ENCODE measurements at regions of chr2 and their contacts with region 1.

Region 1: GRCh38 chr2:198116756-198117155 is 312.4 kb downstream of the PLCL1 start:
- DNase-seq: no peak
- ATAC-seq: peak in 3 of 4 donors; percentile 4 to 40 (median 13)
- H3K4me3 ChIP-seq: no peak overlapping the region
- H3K27ac ChIP-seq: peak overlapping the region in 8 of 12 donors; percentile 18 to 59 (median 35)
- H3K4me1 ChIP-seq: peaks cover 0 to 62% (median 32%) of the 10 kb centered on the region in 12 donors
- H3K27me3 ChIP-seq: no peaks in the 10 kb centered on the region
- CTCF ChIP-seq: no peak
- POLR2A ChIP-seq: no peak

Region 2: DNA sequence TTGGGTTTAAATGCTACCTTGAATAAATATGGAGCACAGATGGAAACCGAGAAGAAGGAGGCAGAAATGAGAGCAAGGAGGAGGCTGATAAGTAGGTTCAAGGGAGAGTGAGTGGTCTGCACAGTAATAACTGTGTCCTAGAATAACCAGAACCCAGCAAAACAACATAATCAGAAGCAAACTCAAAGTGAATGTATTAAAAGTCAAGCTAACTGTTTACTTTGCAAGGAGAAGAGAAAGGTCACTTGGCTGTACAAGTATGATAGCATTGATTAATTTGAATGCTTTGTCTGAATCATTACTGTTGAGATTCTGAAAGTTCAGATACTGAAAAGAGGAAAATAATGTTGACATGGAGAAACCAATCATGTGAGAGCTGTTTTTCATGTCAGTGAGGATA is 53.5 kb before region 1 on chr2:
- intact Hi-C with region 1: loop called in 3 of 10 experiments (anchors 5 kb)
- DNase-seq: no peak
- ATAC-seq: no peak
- H3K4me3 ChIP-seq: no peak overlapping the region
- H3K27ac ChIP-seq: no peak overlapping the region
- H3K4me1 ChIP-seq: peaks cover 0 to 44% (median 6%) of the 10 kb centered on the region in 12 donors
- H3K27me3 ChIP-seq: no peaks in the 10 kb centered on the region
- CTCF ChIP-seq: no peak
- POLR2A ChIP-seq: no peak